HepG2 (cell line): ENCODE measurements at regions of chr6 and their contacts with region 1.

Region 1: GRCh38 chr6:56451165-56451739 is 191.4 kb downstream of the DST start:
- DNase-seq: no peak
- ATAC-seq: peak; percentile 77
- H3K4me3 ChIP-seq: no peak overlapping the region
- H3K27ac ChIP-seq: peak overlapping the region; percentile 49
- H3K4me1 ChIP-seq: peaks cover 24% of the 10 kb centered on the region
- H3K27me3 ChIP-seq: no peaks in the 10 kb centered on the region
- CTCF ChIP-seq: no peak
- EP300 ChIP-seq: no peak
- POLR2A ChIP-seq: no peak
- RAD21 ChIP-seq: no peak

Region 2: GRCh38 chr6:56416247-56416646 is 35.0 kb before region 1 on chr6:
- CTCF ChIA-PET with region 1: no interaction called
- POLR2A ChIA-PET with region 1: no interaction called
- in situ Hi-C with region 1: no loop called
- intact Hi-C with region 1: loop called (anchors 5 kb)
- DNase-seq: no peak
- ATAC-seq: no peak
- H3K4me3 ChIP-seq: no peak overlapping the region
- H3K27ac ChIP-seq: no peak overlapping the region
- H3K4me1 ChIP-seq: peaks cover 27% of the 10 kb centered on the region
- H3K27me3 ChIP-seq: no peaks in the 10 kb centered on the region
- CTCF ChIP-seq: no peak
- EP300 ChIP-seq: no peak
- POLR2A ChIP-seq: no peak
- RAD21 ChIP-seq: no peak

Region 3: DNA sequence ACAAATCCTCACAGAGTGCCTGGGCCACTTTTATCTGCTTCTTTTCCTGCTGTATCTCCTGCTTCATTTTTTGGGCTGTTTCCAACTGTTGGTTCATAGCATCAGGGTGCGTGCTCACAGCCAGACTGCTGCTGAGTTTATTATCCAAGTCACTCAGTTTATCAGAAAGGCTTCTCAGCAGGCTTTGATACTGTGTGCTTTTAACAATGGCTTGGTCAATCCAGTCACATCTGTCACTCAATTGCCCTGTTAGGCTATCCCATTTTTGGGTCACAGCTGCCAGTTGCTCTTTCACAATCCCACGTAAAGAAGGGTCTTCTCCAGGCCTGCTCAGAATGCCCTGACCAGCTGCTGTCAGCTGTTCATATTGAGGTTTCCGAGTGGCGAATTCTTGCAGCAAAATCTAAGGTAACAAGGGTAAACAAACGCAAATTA is 104.2 kb after region 1 on chr6:
- CTCF ChIA-PET with region 1: no interaction called
- POLR2A ChIA-PET with region 1: no interaction called
- in situ Hi-C with region 1: no loop called
- intact Hi-C with region 1: no loop called
- DNase-seq: no peak
- ATAC-seq: no peak
- H3K4me3 ChIP-seq: no peak overlapping the region
- H3K27ac ChIP-seq: no peak overlapping the region
- H3K4me1 ChIP-seq: peaks cover 17% of the 10 kb centered on the region
- H3K27me3 ChIP-seq: no peaks in the 10 kb centered on the region
- CTCF ChIP-seq: no peak
- EP300 ChIP-seq: no peak
- POLR2A ChIP-seq: no peak
- RAD21 ChIP-seq: no peak